CD8-positive, alpha-beta T cell (primary cell): ENCODE measurements at regions of chr12 and their contacts with region 1.

Region 1: DNA sequence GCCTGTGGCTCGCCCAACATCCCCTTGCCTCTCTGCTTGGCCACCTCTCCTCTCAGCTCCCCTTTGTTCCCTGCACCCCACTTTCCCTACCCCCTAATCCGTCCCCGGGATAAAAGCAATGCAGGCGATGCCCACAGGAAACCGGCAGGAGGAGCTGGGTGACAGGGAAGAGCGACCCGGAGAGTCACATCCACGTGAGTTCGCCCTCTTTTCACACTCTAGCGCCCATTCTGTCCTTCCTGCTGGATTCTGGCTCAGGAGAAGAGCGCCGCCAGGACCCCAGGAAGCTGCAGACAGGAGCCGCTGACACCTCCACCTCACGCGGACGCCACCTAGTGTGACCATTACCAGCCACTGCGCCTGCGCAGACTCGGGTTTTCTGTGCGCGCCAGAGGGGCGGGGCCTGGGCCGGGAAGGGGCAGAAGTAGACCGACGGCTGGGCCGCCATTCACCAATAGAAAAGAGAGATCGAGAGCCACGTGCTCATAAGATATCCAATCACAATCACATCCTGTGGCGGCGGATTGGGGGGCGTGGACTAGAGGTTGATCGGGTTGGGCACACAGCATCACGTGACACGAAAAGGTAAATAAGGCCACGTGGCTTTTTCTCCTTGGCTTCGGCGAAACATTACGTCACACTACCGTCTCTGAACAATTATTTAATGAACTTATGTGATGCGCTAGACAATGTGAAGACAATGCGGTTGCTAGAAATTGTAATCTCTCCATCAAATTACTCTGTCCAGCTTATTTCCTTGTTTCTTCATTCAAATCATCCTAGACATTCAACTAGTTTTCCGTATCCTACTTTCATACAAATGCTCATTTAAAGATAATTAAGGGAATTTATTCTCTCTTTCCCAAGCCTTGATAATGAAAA is 10.1 kb downstream of the PLA2G1B start:
- DNase-seq: peak; percentile 99 to 100 (median 100)
- ATAC-seq: peak; percentile 98
- H3K4me3 ChIP-seq: peak overlapping the region; percentile 61 to 65
- H3K4me3 Mint-ChIP-seq: peak overlapping the region; percentile 88
- H3K27ac ChIP-seq: peak overlapping the region; percentile 75 to 86
- H3K27ac Mint-ChIP-seq: peak overlapping the region; percentile 97
- H3K4me1 ChIP-seq: peaks cover 5% of the 10 kb centered on the region
- H3K4me1 Mint-ChIP-seq: peaks cover 13% of the 10 kb centered on the region
- H3K27me3 ChIP-seq: no peaks in the 10 kb centered on the region
- H3K27me3 Mint-ChIP-seq: no peaks in the 10 kb centered on the region
- CTCF ChIP-seq: peak; percentile 58

Region 2: GRCh38 chr12:120086801-120087621 is 230.5 kb before region 1 on chr12:
- CTCF ChIA-PET with region 1: no interaction called
- POLR2A ChIA-PET with region 1: no interaction called
- intact Hi-C with region 1: loop called in 1 of 2 experiments (anchors 1 kb)
- DNase-seq: peak; percentile 99 to 100 (median 99)
- ATAC-seq: peak; percentile 94
- H3K4me3 ChIP-seq: peak overlapping the region; percentile 54 to 55
- H3K4me3 Mint-ChIP-seq: peak overlapping the region; percentile 81
- H3K27ac ChIP-seq: peak overlapping the region; percentile 36 to 77
- H3K27ac Mint-ChIP-seq: peak overlapping the region; percentile 88
- H3K4me1 ChIP-seq: peaks cover 12% of the 10 kb centered on the region
- H3K4me1 Mint-ChIP-seq: peaks cover 11% of the 10 kb centered on the region
- H3K27me3 ChIP-seq: no peaks in the 10 kb centered on the region
- H3K27me3 Mint-ChIP-seq: no peaks in the 10 kb centered on the region
- CTCF ChIP-seq: peak; percentile 82

Region 3: GRCh38 chr12:120292661-120293531 is 24.6 kb before region 1 on chr12 and contains the start of gene RNU4-1:
- CTCF ChIA-PET with region 1: interaction called, 5 read pairs
- POLR2A ChIA-PET with region 1: interaction called, 38 read pairs
- intact Hi-C with region 1: loop called (anchors 1 kb)
- DNase-seq: peak; percentile 53 to 91 (median 75)
- ATAC-seq: peak; percentile 56
- H3K4me3 ChIP-seq: peak within 1 kb of the TSS; percentile 69 to 72
- H3K4me3 Mint-ChIP-seq: no peak within 1 kb of the TSS
- H3K27ac ChIP-seq: peak within 1 kb of the TSS; percentile 99
- H3K27ac Mint-ChIP-seq: no peak within 1 kb of the TSS
- H3K4me1 ChIP-seq: peaks cover 14% of the 10 kb centered on the region
- H3K4me1 Mint-ChIP-seq: peaks cover 8% of the 10 kb centered on the region
- H3K27me3 ChIP-seq: no peaks in the 10 kb centered on the region
- H3K27me3 Mint-ChIP-seq: no peaks in the 10 kb centered on the region
- CTCF ChIP-seq: no peak
- total RNA-seq, gene RNU4-1: 1,572 to 1,612 TPM

Region 4: GRCh38 chr12:120437754-120438494 is 120.5 kb after region 1 on chr12 and contains the start of gene COX6A1:
- CTCF ChIA-PET with region 1: no interaction called
- POLR2A ChIA-PET with region 1: no interaction called
- intact Hi-C with region 1: loop called in 1 of 2 experiments (anchors 2 kb)
- DNase-seq: peak; percentile 91 to 100 (median 96)
- ATAC-seq: peak; percentile 95
- H3K4me3 ChIP-seq: peak within 1 kb of the TSS; percentile 74 to 76
- H3K4me3 Mint-ChIP-seq: peak within 1 kb of the TSS; percentile 88
- H3K27ac ChIP-seq: peak within 1 kb of the TSS; percentile 58 to 85
- H3K27ac Mint-ChIP-seq: peak within 1 kb of the TSS; percentile 91
- H3K4me1 ChIP-seq: peaks cover 26% of the 10 kb centered on the region
- H3K4me1 Mint-ChIP-seq: peaks cover 26% of the 10 kb centered on the region
- H3K27me3 ChIP-seq: no peaks in the 10 kb centered on the region
- H3K27me3 Mint-ChIP-seq: peaks cover 3% of the 10 kb centered on the region
- CTCF ChIP-seq: no peak
- total RNA-seq, gene COX6A1: 118 to 124 TPM

Region 5: GRCh38 chr12:120534203-120534702 is 216.8 kb after region 1 on chr12 and contains the start of gene RNF10:
- CTCF ChIA-PET with region 1: no interaction called
- POLR2A ChIA-PET with region 1: no interaction called
- intact Hi-C with region 1: loop called in 1 of 2 experiments (anchors 5 kb)
- DNase-seq: peak; percentile 48 to 92 (median 73)
- ATAC-seq: peak; percentile 69
- H3K4me3 ChIP-seq: peak within 1 kb of the TSS; percentile 89 to 95
- H3K4me3 Mint-ChIP-seq: peak within 1 kb of the TSS; percentile 96
- H3K27ac ChIP-seq: peak within 1 kb of the TSS; percentile 76 to 83
- H3K27ac Mint-ChIP-seq: peak within 1 kb of the TSS; percentile 95
- H3K4me1 ChIP-seq: peaks cover 38% of the 10 kb centered on the region
- H3K4me1 Mint-ChIP-seq: peaks cover 57% of the 10 kb centered on the region
- H3K27me3 ChIP-seq: no peaks in the 10 kb centered on the region
- H3K27me3 Mint-ChIP-seq: no peaks in the 10 kb centered on the region
- CTCF ChIP-seq: no peak
- total RNA-seq, gene RNF10: 402 to 410 TPM

Region 6: GRCh38 chr12:120904197-120904773 is 586.8 kb after region 1 on chr12 and contains the start of gene SPPL3:
- CTCF ChIA-PET with region 1: no interaction called
- POLR2A ChIA-PET with region 1: no interaction called
- intact Hi-C with region 1: loop called in 1 of 2 experiments (anchors 10 kb)
- DNase-seq: peak; percentile 86 to 96 (median 93)
- ATAC-seq: peak; percentile 75
- H3K4me3 ChIP-seq: peak within 1 kb of the TSS; percentile 76 to 82
- H3K4me3 Mint-ChIP-seq: peak within 1 kb of the TSS; percentile 99
- H3K27ac ChIP-seq: peak within 1 kb of the TSS; percentile 66 to 84
- H3K27ac Mint-ChIP-seq: peak within 1 kb of the TSS; percentile 98
- H3K4me1 ChIP-seq: peaks cover 21% of the 10 kb centered on the region
- H3K4me1 Mint-ChIP-seq: peaks cover 32% of the 10 kb centered on the region
- H3K27me3 ChIP-seq: no peaks in the 10 kb centered on the region
- H3K27me3 Mint-ChIP-seq: no peaks in the 10 kb centered on the region
- CTCF ChIP-seq: no peak
- total RNA-seq, gene SPPL3: 42.3 to 42.9 TPM